Heart right ventricle (tissue), 16 donors: ENCODE measurements at regions of chr22 and their contacts with region 1.

Region 1: DNA sequence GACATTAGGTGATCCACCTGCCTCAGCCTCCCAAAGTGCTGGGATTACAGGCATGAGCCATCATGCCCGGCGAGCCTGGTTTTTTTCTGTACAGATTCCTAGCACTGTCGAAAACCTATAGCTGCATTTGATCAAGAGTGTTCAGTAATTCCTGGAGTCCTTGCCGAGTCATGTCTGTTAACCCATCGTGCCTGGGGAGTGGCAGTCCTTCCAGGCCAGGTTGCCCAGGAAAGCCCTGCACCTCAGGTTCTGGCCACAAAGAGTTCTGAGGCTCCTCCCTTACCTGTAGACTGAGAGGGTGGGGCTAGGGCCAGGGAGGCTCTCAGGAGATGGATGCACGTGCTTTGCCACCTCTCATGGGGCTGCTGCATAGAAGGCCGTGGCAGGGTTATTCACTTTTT is 17.0 kb downstream of the YDJC start:
- DNase-seq: no peak
- ATAC-seq: no peak
- H3K4me3 ChIP-seq: no peak overlapping the region
- H3K27ac ChIP-seq: no peak overlapping the region
- H3K4me1 ChIP-seq: peaks cover 0 to 25% (median 3%) of the 10 kb centered on the region in 9 donors
- H3K27me3 ChIP-seq: no peaks in the 10 kb centered on the region
- CTCF ChIP-seq: no peak

Region 2: GRCh38 chr22:21457023-21457787 is 155.7 kb before region 1 on chr22:
- intact Hi-C with region 1: no loop called
- DNase-seq: no peak
- ATAC-seq: peak in 1 of 8 donors; percentile 33
- H3K4me3 ChIP-seq: no peak overlapping the region
- H3K27ac ChIP-seq: no peak overlapping the region
- H3K4me1 ChIP-seq: no peaks in the 10 kb centered on the region
- H3K27me3 ChIP-seq: no peaks in the 10 kb centered on the region
- CTCF ChIP-seq: no peak

Region 3: GRCh38 chr22:21579518-21580147 is 33.2 kb before region 1 on chr22:
- intact Hi-C with region 1: loop called in 1 of 10 experiments (anchors 5 kb)
- DNase-seq: no peak
- ATAC-seq: no peak
- H3K4me3 ChIP-seq: no peak overlapping the region
- H3K27ac ChIP-seq: no peak overlapping the region
- H3K4me1 ChIP-seq: peaks cover 2 to 58% (median 38%) of the 10 kb centered on the region in 9 donors
- H3K27me3 ChIP-seq: no peaks in the 10 kb centered on the region
- CTCF ChIP-seq: no peak

Region 4: DNA sequence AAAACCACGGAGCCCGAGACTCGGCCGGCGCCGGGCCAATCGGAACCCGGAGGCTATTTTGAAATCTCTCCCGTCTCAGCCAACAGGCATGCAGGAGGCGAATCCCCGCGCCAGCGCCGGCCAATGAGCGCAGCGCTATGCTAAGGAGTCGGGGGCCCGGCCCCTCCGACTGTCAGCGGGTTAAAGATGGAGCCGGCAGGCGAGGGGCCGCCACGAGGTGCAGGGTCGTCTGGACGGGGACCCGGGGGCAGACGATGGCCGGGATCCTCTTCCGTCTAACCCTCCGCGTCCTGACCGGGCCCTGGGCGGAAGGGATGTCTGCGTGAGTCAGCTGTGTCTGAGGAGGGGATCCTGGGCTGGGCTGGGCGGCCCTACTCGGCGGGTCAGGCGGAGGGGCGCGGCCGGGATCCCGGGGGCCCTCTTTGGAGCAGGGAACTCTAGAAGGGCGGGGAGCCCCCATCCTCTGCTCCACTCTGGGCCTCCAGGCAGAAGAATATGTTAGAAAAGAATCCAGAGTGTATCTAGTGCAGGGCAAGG is 39.2 kb after region 1 on chr22:
- intact Hi-C with region 1: no loop called
- DNase-seq: peak; percentile 85 to 90
- ATAC-seq: peak; percentile 88 to 97 (median 94)
- H3K4me3 ChIP-seq: peak overlapping the region; percentile 32 to 73 (median 58)
- H3K27ac ChIP-seq: peak overlapping the region in 4 of 10 donors; percentile 5 to 65 (median 48)
- H3K4me1 ChIP-seq: peaks cover 5 to 33% (median 22%) of the 10 kb centered on the region in 9 donors
- H3K27me3 ChIP-seq: peaks cover 0 to 3% (median 0%) of the 10 kb centered on the region in 7 donors
- CTCF ChIP-seq: no peak